Activated CD4-positive, alpha-beta T cell treated with anti-CD3 and anti-CD28 coated beads, Interleukin-2, amount 10 ng/mL, durations not matched to agents 24 days and 14 days (primary cell): ENCODE measurements at regions of chr6 and their contacts with region 1.

Region 1: GRCh38 chr6:106519460-106520394 is 109.6 kb downstream of the RTN4IP1 start:
- DNase-seq: peak; percentile 92
- H3K4me3 Mint-ChIP-seq: peak overlapping the region; percentile 80
- H3K27ac Mint-ChIP-seq: peak overlapping the region; percentile 97
- H3K4me1 Mint-ChIP-seq: peaks cover 59% of the 10 kb centered on the region
- H3K27me3 Mint-ChIP-seq: no peaks in the 10 kb centered on the region

Region 2: DNA sequence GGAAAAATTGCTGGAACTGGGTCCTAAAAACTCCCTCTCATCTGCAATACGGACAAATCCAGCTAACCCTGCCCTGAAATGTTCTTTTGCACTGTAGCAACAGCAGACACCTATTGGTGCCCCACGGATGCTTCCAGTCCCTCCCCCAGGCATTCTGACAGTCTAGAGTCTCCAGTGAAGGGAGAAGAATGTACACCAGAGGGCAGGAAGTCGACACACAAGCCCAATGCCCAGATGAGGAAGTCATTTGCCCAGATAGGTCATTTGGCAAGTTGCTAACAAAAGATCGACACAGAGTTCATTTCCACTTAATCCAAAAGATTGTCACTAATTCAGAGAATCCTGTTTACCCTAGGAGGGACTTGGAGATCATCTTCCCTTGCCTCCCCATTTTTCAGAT is 726.6 kb before region 1 on chr6:
- intact Hi-C with region 1: loop called (anchors 10 kb)
- DNase-seq: peak; percentile 72
- H3K4me3 Mint-ChIP-seq: peak overlapping the region; percentile 54
- H3K27ac Mint-ChIP-seq: peak overlapping the region; percentile 76
- H3K4me1 Mint-ChIP-seq: peaks cover 74% of the 10 kb centered on the region
- H3K27me3 Mint-ChIP-seq: no peaks in the 10 kb centered on the region

Region 3: GRCh38 chr6:106325336-106326178 is 194.2 kb before region 1 on chr6 and contains the start of gene ATG5:
- intact Hi-C with region 1: loop called (anchors 5 kb)
- DNase-seq: peak; percentile 100
- H3K4me3 Mint-ChIP-seq: peak within 1 kb of the TSS; percentile 100
- H3K27ac Mint-ChIP-seq: peak within 1 kb of the TSS; percentile 100
- H3K4me1 Mint-ChIP-seq: peaks cover 37% of the 10 kb centered on the region
- H3K27me3 Mint-ChIP-seq: peaks cover 31% of the 10 kb centered on the region
- total RNA-seq, gene ATG5: 29.5 and 30.7 TPM in 2 replicates

Region 4: DNA sequence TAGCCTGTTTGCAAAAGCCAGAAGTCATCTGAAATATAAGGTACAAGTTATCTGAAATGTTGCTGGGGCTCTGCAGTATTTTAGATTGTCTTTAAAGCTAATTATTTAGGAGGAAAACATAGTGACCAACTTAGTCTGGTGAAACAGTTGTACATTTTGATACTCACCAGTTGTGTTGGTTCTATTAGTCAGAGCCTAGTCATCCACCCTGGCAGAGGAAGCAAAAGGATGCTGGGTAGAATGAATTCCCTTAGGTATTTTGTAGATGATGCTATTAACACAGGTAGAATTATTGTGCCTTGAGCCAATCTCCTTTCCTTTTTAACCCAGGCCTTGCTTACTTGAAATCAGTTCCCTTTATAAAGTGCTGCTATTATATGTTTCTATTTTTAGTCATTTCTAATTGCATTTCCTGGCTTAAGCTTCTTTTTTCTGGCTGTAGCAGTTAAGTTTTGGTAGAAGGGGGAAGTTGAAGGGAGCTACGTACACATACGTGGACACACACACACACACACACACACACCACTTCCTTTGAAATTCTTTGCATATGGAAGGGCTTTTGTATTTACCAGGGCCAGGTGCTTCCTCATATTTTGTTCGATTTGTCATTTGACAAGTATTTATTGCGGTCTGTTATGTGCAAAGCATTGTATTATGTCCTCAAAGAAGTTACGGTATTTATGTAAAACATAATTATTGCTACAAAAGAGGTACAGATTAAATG is 27.1 kb after region 1 on chr6:
- intact Hi-C with region 1: loop called (anchors 1 kb)
- DNase-seq: peak; percentile 51
- H3K4me3 Mint-ChIP-seq: no peak overlapping the region
- H3K27ac Mint-ChIP-seq: peak overlapping the region; percentile 49
- H3K4me1 Mint-ChIP-seq: peaks cover 21% of the 10 kb centered on the region
- H3K27me3 Mint-ChIP-seq: no peaks in the 10 kb centered on the region

Region 5: GRCh38 chr6:107114213-107114905 is 594.6 kb after region 1 on chr6:
- intact Hi-C with region 1: loop called (anchors 10 kb)
- DNase-seq: peak; percentile 93
- H3K4me3 Mint-ChIP-seq: peak overlapping the region; percentile 84
- H3K27ac Mint-ChIP-seq: peak overlapping the region; percentile 77
- H3K4me1 Mint-ChIP-seq: peaks cover 18% of the 10 kb centered on the region
- H3K27me3 Mint-ChIP-seq: peaks cover 20% of the 10 kb centered on the region